IMR-90 (cell line): ENCODE measurements at regions of chr7 and their contacts with region 1.

Region 1: DNA sequence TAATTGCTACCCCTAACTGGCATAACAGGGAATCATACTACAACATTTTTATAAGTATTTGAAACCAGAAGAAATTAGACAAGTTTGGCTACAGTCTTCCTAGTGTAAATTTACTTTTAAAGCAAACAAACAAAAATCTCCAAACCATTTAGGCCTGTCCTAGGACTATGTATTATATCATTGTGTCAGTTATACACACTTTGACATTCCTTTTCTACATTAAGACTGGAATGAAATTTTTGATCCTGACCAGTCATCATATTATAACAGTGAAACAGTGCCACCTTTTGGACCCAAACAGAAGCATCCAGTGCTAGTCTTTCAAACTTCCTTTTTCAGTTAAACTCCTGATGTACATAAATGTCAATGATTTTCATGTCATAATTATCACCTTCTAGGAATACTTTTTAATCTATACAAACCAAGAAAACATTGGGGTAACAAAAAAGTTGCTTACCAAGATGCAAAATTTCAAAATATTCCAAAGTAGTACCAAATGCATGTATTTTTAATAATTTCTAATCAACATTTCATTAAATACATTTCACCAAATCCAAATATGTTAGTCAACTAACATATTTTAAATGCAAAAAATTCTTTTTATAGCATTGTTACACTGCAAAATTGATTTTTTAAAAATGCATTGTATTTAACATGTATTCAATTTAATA is 75.7 kb downstream of the IMMP2L start:
- DNase-seq: peak; percentile 67
- ATAC-seq: peak; percentile 89
- H3K4me3 ChIP-seq: no peak overlapping the region
- H3K27ac ChIP-seq: no peak overlapping the region
- H3K4me1 ChIP-seq: no peaks in the 10 kb centered on the region
- H3K27me3 ChIP-seq: no peaks in the 10 kb centered on the region
- CTCF ChIP-seq: peak; percentile 84
- POLR2A ChIP-seq: no peak
- RAD21 ChIP-seq: peak; percentile 86

Region 2: DNA sequence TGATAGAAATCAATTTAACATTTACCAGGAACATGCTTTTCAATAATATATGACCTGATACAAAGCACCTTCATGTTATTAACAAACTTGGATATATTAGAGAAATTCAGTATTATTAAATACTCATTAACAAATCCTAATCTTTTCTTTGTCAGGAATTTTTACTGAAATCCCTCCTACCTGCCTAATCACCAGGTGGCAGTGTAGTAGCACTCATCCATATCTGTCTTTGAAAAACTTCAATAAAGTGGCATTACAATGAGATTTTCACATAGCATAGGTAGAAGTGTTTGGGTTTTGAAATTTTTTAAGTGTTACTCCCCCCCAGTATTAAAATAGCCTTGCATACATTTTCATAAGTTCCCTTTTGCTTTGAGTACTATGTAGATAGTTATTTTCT is 1642.2 kb before region 1 on chr7:
- CTCF ChIA-PET with region 1: no interaction called
- POLR2A ChIA-PET with region 1: no interaction called
- dilution Hi-C with region 1: no loop called
- in situ Hi-C with region 1: no loop called
- intact Hi-C with region 1: loop called (anchors 5 kb)
- DNase-seq: peak; percentile 14
- ATAC-seq: no peak
- H3K4me3 ChIP-seq: no peak overlapping the region
- H3K27ac ChIP-seq: no peak overlapping the region
- H3K4me1 ChIP-seq: no peaks in the 10 kb centered on the region
- H3K27me3 ChIP-seq: no peaks in the 10 kb centered on the region
- CTCF ChIP-seq: peak; percentile 54
- POLR2A ChIP-seq: no peak
- RAD21 ChIP-seq: peak; percentile 65

Region 3: DNA sequence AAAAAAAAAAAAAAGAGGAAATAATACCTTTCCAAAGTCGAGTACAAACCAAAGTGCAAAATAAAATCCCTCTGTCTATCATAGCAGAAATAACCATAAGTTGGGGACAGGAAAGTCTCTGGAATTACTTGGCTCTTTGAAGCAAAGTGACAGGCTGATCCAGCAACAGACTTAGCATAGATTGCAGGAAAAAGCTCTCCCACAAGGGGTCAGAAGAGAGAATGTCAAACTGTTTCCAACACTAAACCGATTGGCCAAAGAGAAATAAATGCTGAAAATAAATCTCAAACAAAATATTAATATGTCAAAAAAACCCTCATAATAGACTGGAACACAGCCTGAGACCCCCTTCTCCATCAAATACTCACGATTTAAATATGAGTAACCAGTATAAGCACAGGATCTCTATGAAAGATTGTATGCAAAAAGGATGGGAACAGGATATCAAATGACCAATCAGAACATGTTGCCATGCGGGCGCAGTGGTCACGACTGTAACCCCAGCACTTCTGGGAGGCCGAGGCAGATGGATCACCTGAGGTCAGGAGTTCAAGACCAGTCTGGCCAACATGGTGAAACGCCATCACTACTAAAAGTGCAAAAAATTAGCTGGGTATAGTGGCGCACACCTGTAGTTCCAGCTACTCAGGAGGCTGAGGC is 1396.4 kb before region 1 on chr7:
- CTCF ChIA-PET with region 1: no interaction called
- POLR2A ChIA-PET with region 1: no interaction called
- dilution Hi-C with region 1: no loop called
- in situ Hi-C with region 1: no loop called
- intact Hi-C with region 1: loop called (anchors 5 kb)
- DNase-seq: peak; percentile 37
- ATAC-seq: no peak
- H3K4me3 ChIP-seq: no peak overlapping the region
- H3K27ac ChIP-seq: no peak overlapping the region
- H3K4me1 ChIP-seq: no peaks in the 10 kb centered on the region
- H3K27me3 ChIP-seq: no peaks in the 10 kb centered on the region
- CTCF ChIP-seq: peak; percentile 48
- POLR2A ChIP-seq: no peak
- RAD21 ChIP-seq: peak; percentile 50

Region 4: GRCh38 chr7:110534241-110534931 is 952.2 kb before region 1 on chr7:
- CTCF ChIA-PET with region 1: no interaction called
- POLR2A ChIA-PET with region 1: no interaction called
- dilution Hi-C with region 1: no loop called
- in situ Hi-C with region 1: no loop called
- intact Hi-C with region 1: loop called (anchors 2 kb)
- DNase-seq: peak; percentile 71
- ATAC-seq: peak; percentile 85
- H3K4me3 ChIP-seq: no peak overlapping the region
- H3K27ac ChIP-seq: peak overlapping the region; percentile 94
- H3K4me1 ChIP-seq: peaks cover 11% of the 10 kb centered on the region
- H3K27me3 ChIP-seq: no peaks in the 10 kb centered on the region
- CTCF ChIP-seq: peak; percentile 16; the same call in 1 of the 2 replicates
- POLR2A ChIP-seq: no peak
- RAD21 ChIP-seq: no peak

Region 5: GRCh38 chr7:110612680-110613079 is 873.9 kb before region 1 on chr7:
- CTCF ChIA-PET with region 1: no interaction called
- POLR2A ChIA-PET with region 1: no interaction called
- dilution Hi-C with region 1: no loop called
- in situ Hi-C with region 1: no loop called
- intact Hi-C with region 1: no loop called
- DNase-seq: no peak
- ATAC-seq: no peak
- H3K4me3 ChIP-seq: no peak overlapping the region
- H3K27ac ChIP-seq: no peak overlapping the region
- H3K4me1 ChIP-seq: no peaks in the 10 kb centered on the region
- H3K27me3 ChIP-seq: no peaks in the 10 kb centered on the region
- CTCF ChIP-seq: no peak
- POLR2A ChIP-seq: no peak
- RAD21 ChIP-seq: no peak

Region 6: DNA sequence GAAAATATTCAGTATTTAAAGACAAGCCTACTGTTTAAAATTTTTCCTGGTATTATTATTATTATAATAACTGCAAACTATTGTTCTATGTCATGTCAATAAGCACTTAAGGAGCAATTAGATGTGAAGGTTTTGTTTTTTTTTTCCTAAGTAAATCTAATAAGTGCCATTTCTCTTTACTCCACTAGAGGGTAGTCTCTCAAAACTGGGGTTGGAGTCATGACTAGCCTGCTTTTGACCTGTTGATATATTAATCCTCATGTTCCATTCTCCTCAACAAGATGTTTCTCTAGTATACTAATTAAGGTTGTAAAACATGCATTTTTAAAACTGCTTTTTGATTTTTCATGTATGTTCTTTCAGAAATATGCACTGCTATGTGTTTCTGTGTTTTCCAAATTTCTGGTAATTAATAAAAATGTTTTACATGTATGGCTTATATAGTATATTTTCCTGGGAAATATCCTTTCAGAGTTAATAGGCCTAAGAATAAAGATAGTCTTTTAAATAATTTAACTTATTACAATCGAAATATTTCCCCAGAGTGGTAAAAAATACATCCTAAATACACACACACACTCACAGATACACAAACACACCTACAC is 396.7 kb before region 1 on chr7:
- CTCF ChIA-PET with region 1: interaction called, 4 read pairs
- POLR2A ChIA-PET with region 1: no interaction called
- dilution Hi-C with region 1: no loop called
- in situ Hi-C with region 1: loop called (anchors 5 kb)
- intact Hi-C with region 1: loop called (anchors 1 kb)
- DNase-seq: peak; percentile 64
- ATAC-seq: peak; percentile 38; the same call in 1 of the 2 replicates
- H3K4me3 ChIP-seq: no peak overlapping the region
- H3K27ac ChIP-seq: no peak overlapping the region
- H3K4me1 ChIP-seq: no peaks in the 10 kb centered on the region
- H3K27me3 ChIP-seq: no peaks in the 10 kb centered on the region
- CTCF ChIP-seq: peak; percentile 75
- POLR2A ChIP-seq: no peak
- RAD21 ChIP-seq: peak; percentile 68

Region 7: GRCh38 chr7:111329367-111330234 is 157.0 kb before region 1 on chr7:
- CTCF ChIA-PET with region 1: no interaction called
- POLR2A ChIA-PET with region 1: no interaction called
- dilution Hi-C with region 1: no loop called
- in situ Hi-C with region 1: loop called (anchors 10 kb)
- intact Hi-C with region 1: loop called (anchors 1 kb)
- DNase-seq: peak; percentile 33
- ATAC-seq: no peak
- H3K4me3 ChIP-seq: no peak overlapping the region
- H3K27ac ChIP-seq: no peak overlapping the region
- H3K4me1 ChIP-seq: no peaks in the 10 kb centered on the region
- H3K27me3 ChIP-seq: no peaks in the 10 kb centered on the region
- CTCF ChIP-seq: peak; percentile 47
- POLR2A ChIP-seq: no peak
- RAD21 ChIP-seq: peak; percentile 58

Region 8: DNA sequence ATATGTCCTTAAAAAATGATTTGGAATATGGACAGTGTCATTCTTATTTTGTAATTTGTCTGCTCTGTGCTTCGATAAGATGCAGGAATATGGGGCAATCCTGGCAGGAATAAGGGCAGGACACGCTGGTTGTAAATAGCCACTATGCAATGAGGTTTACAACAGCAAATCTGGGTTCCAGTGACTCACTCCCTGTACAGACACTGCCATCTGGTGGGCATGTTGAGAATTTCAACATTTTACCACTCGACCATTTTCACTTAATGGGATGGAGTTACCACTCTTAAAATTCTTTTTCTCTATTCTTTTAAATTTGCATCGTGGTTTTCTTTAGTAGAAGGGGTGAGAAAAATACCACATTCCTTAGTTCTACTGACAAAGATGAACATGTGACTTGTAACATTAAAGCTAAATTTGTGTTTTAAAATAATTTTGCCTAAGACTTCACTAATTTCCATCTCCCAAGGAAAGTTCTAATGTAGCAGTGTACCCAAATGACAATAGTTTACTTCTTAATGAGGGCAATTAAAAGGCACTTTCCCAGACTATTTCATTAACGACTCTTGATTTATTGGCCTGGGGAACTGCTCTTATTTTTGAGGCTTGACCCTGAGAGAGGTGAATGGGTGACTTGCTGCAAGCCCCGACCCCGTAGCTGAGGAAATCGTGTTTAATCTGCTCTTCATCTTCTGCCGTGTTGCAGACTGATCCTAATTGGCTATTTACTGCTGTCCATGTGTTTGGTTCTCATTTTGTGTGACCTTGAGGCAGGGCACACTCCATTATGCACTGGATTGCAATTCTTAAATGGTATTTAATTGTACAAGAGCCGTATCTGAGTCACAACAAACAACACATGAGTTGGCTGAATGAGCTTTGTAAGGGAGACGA is 249.3 kb after region 1 on chr7:
- CTCF ChIA-PET with region 1: no interaction called
- POLR2A ChIA-PET with region 1: no interaction called
- dilution Hi-C with region 1: no loop called
- in situ Hi-C with region 1: no loop called
- intact Hi-C with region 1: loop called (anchors 1 kb)
- DNase-seq: peak; percentile 77
- ATAC-seq: peak; percentile 93
- H3K4me3 ChIP-seq: no peak overlapping the region
- H3K27ac ChIP-seq: no peak overlapping the region
- H3K4me1 ChIP-seq: 0 out of 2 replicates have a peak, but pooled peaks cover 2% of the 10 kb centered on the region
- H3K27me3 ChIP-seq: no peaks in the 10 kb centered on the region
- CTCF ChIP-seq: peak; percentile 85
- POLR2A ChIP-seq: no peak
- RAD21 ChIP-seq: peak; percentile 90